Mammary epithelial cell (primary cell): ENCODE measurements at regions of chr9 and their contacts with region 1.

Region 1: DNA sequence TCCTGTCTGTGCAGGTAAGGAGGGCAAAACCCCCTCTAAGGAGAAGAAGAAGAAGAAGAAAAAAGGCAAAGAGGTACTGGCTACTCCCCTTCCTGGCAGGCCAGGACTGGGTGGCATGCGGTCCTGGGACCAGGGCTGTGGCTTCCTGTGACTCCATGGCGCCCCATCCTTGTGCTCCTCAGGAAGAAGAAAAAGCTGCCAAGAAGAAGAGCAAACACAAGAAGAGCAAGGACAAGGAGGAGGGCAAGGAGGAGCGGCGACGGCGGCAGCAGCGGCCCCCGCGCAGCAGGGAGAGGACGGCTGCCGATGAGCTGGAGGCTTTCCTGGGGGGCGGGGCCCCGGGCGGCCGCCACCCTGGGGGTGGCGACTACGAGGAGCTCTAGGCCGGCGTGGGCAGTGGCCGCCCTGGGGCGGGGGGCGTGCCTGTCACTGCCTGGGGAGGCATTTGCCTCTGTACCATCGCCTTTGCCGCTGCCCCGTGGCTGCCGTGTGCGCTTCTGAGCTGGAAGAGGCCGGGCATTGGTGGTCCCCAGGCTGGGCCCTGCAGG is 2.1 kb upstream of the AJM1 start:
- DNase-seq: no peak
- H3K4me3 ChIP-seq: no peak overlapping the region
- H3K27ac ChIP-seq: no peak overlapping the region
- H3K4me1 ChIP-seq: peaks cover 25% of the 10 kb centered on the region
- H3K27me3 ChIP-seq: peaks cover 5% of the 10 kb centered on the region
- CTCF ChIP-seq: no peak

Region 2: GRCh38 chr9:136757328-136757727 is 82.9 kb before region 1 on chr9:
- CTCF ChIA-PET with region 1: no interaction called
- dilution Hi-C with region 1: loop called (anchors 5 kb)
- in situ Hi-C with region 1: no loop called
- intact Hi-C with region 1: no loop called
- DNase-seq: no peak
- H3K4me3 ChIP-seq: no peak overlapping the region
- H3K27ac ChIP-seq: no peak overlapping the region
- H3K4me1 ChIP-seq: peaks cover 4% of the 10 kb centered on the region
- H3K27me3 ChIP-seq: peaks cover 4% of the 10 kb centered on the region
- CTCF ChIP-seq: no peak

Region 3: DNA sequence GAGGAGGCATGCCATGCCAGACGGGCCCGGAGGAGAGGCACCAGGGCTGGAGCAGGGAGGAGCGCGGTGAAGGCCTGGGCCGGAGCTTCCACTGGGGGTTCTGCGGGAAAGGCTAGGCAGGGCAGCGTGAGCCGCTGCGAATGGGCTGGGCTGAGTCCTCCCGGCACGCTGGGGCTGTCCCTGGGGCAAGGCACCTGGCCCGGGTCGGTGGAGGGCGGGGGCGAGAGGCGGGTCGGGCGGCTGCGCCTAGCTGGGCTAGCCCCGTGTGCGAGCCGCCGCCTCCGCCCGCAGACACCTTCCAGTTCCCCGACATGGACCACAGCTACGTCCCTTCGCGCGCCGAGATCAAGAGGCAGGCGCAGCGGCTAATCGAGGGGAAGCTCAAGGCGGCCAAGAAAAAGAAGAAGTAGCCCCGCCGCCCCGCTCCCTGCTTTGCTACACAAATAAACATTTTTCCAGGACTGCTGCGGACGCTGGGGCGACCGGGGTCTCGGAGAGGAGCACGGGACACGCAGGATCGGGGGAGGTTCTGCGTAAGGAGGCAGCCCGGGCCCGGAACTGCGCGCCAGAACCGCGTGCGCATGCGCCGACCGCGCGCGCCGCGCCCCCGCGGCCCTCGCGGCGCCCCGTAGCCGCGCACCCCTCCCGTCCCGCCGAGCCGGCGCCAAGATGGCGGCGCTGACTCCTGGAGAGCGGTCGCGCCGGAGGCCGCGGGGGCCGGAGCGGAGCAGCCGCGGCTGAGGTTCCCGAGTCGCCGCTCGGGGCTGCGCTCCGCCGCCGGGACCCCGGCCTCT is 32.7 kb before region 1 on chr9 and contains the start of gene RABL6:
- CTCF ChIA-PET with region 1: no interaction called
- dilution Hi-C with region 1: loop called (anchors 5 kb)
- in situ Hi-C with region 1: no loop called
- intact Hi-C with region 1: loop called (anchors 5 kb)
- DNase-seq: peak; percentile 66
- H3K4me3 ChIP-seq: peak within 1 kb of the TSS; percentile 74 to 93 (median 87)
- H3K27ac ChIP-seq: peak within 1 kb of the TSS; percentile 39
- H3K4me1 ChIP-seq: peaks cover 24% of the 10 kb centered on the region
- H3K27me3 ChIP-seq: no peaks in the 10 kb centered on the region
- CTCF ChIP-seq: no peak
- total RNA-seq, gene RABL6: 53.8 to 84.3 TPM

Region 4: DNA sequence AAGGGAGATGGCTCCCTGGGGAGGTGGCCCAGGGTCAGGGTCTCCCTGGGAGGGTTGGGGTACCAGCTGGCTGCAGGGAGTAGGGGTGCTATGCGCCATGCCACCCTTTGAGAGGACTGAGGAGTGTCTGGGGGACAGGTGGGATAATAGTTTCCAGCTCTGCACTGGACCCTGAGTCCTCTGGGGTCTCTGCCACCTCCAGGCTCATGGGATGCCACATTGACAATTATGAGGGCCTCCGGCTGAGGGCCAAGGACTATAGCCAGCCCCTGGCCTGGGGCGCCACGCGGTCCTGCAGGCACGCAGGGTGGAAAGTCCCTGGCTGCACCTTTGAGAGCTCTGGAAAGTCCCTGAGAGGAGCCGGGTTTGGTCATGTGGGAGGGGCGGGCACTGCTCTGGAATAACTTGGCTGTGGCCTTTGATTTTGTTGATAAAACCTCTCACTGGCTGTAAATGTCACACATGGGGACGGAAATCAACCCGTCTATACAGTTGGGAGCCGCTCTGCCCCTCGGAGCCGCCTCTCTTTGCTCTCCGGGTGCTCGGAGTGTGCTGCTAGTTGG is 62.1 kb after region 1 on chr9:
- CTCF ChIA-PET with region 1: interaction called, 4 read pairs
- dilution Hi-C with region 1: loop called (anchors 5 kb)
- in situ Hi-C with region 1: no loop called
- intact Hi-C with region 1: no loop called
- DNase-seq: peak; percentile 90
- H3K4me3 ChIP-seq: peak overlapping the region in 1 of 3 experiments; percentile 28
- H3K27ac ChIP-seq: peak overlapping the region; percentile 94
- H3K4me1 ChIP-seq: peaks cover 33% of the 10 kb centered on the region
- H3K27me3 ChIP-seq: no peaks in the 10 kb centered on the region
- CTCF ChIP-seq: no peak

Region 5: DNA sequence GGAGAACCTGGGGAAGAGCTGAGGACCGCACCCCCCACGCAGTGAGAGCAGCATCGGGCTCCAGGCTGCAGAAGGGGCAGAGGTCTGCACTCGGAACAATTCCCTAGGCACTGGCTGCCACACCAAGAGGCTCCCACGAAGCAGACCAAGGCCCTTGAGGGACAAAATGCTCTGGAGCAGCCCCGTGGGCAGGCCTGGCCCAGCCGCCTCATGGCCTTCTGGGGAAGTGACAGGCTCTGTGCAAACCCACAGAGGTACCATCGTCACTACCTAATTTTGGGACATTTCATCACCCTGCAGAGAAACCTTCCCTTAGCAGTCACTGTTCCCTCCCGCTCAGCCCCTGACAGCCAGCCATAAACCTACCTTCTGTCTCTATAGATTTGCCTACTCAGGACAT is 88.4 kb after region 1 on chr9:
- CTCF ChIA-PET with region 1: no interaction called
- dilution Hi-C with region 1: loop called (anchors 5 kb)
- in situ Hi-C with region 1: no loop called
- intact Hi-C with region 1: no loop called
- DNase-seq: no peak
- H3K4me3 ChIP-seq: no peak overlapping the region
- H3K27ac ChIP-seq: no peak overlapping the region
- H3K4me1 ChIP-seq: no peaks in the 10 kb centered on the region
- H3K27me3 ChIP-seq: no peaks in the 10 kb centered on the region
- CTCF ChIP-seq: no peak

Region 6: GRCh38 chr9:137007108-137007815 is 167.0 kb after region 1 on chr9:
- CTCF ChIA-PET with region 1: no interaction called
- dilution Hi-C with region 1: no loop called
- in situ Hi-C with region 1: no loop called
- intact Hi-C with region 1: no loop called
- DNase-seq: no peak
- H3K4me3 ChIP-seq: no peak overlapping the region
- H3K27ac ChIP-seq: no peak overlapping the region
- H3K4me1 ChIP-seq: no peaks in the 10 kb centered on the region
- H3K27me3 ChIP-seq: no peaks in the 10 kb centered on the region
- CTCF ChIP-seq: no peak